Right ventricle myocardium inferior (tissue), 1 donor: ENCODE measurements at regions of chr21 and their contacts with region 1.

Region 1: DNA sequence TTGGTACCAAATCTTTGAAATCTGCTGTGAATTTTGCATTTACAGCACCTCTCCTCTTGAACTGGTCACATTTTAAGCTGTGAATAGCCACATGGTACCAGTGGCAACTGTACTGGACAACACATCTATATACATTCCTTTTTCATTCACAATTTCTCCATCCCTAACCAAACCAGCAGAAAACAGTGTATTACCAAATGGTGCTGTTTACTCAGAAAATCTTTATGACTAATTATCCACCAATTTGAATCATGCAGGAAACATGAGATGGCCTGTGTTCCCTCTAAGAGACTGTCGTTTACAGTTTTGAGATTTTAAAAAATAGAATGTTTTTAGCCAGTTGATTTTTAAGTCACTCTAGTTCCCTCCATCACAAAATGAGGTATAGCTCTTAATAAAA is 17.6 kb upstream of the CCT8 start:
- DNase-seq: no peak
- ATAC-seq: no peak

Region 2: DNA sequence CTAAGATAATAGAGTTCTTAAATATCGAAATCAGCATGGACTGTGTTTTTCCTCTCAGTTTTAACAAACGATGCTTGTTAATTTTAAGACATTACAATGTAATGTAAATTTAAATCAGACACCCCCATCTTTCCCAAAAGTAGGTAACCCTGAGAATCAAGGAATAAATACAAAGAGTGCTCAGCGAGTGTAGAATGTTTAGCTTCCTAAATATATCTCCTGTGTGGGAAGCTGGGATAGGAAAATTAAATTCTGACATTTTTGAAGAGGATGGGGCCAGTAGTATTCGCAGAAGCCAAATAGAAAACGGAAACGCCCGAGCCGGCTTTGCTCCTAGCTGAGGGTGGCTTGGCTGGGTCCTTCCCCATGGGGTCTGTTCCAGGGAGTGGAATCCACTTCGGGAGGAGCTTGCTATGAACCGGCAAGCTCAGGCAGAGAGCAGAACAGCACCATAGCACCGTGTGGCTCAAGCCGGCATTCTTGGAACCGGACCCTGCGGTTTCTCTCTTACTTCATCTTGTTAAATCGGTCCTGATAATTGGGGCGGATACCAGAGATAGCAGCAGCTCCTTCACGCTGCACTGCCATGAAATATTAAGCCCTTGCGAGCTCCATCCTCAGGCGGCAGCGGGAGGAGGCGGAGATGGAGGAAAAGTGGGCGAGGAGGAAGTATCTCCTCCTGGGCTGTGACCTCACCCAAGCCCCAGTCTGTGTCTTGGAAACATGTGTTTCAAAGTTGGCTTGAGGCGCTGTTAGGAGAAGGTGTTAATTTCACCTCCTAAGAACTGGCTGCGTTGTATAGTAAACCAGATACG is 64.3 kb after region 1 on chr21:
- intact Hi-C with region 1: loop called (anchors 10 kb)
- DNase-seq: peak; percentile 83
- ATAC-seq: peak; percentile 95